Activated CD8-positive, alpha-beta memory T cell treated with anti-CD3 and anti-CD28 coated beads, Interleukin-2, amount 10 ng/mL, durations not matched to agents 7 days and 5 days (primary cell): ENCODE measurements at regions of chr2 and their contacts with region 1.

Region 1: DNA sequence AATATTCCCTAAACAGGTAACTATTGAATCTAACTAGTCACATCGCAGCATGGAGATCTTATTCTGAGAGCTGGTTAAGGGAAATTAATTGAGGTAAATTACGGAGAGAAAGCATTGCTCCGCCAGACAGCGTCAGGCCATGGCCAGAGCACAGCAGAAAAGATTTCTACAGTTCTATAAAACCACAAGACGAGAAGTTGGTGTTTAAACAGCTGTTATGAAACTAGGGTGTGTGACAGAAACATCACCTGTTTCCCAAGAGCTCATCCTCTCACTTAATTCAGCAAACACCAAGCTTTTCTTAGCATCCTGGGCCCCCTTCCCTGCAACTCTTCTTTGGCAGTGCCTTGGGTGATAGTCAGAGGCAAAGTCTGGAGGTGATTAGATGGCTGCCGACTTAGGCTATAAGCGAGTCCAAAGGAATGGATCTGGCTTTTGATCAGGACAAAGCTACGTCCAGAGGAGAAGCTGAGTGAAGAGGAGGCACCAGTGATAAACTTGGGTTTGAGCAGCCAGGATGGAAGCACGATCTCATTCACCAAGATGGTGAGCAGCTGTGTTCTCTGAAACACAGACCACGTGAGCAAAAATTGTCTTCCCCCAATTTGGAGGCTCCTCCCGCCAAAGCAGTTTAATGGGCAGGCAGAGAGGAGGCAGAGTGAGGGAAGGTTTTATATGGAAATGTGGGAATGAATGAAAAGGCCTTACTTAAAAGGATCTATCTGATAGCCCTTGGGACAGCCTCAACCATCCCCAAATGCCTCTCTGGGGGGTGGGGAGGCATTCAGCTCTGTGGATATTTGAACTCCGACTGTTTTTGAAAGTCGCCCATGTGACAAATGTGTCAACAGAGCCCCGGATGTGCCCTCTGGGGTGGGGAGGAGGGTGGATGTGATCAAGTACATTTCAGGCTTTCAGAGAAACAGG is 57.8 kb downstream of the PKDCC start:
- DNase-seq: peak; percentile 94
- ATAC-seq: peak; percentile 69
- H3K4me3 Mint-ChIP-seq: no peak overlapping the region
- H3K27ac Mint-ChIP-seq: no peak overlapping the region
- H3K4me1 Mint-ChIP-seq: peaks cover 32% of the 10 kb centered on the region
- H3K27me3 Mint-ChIP-seq: no peaks in the 10 kb centered on the region

Region 2: DNA sequence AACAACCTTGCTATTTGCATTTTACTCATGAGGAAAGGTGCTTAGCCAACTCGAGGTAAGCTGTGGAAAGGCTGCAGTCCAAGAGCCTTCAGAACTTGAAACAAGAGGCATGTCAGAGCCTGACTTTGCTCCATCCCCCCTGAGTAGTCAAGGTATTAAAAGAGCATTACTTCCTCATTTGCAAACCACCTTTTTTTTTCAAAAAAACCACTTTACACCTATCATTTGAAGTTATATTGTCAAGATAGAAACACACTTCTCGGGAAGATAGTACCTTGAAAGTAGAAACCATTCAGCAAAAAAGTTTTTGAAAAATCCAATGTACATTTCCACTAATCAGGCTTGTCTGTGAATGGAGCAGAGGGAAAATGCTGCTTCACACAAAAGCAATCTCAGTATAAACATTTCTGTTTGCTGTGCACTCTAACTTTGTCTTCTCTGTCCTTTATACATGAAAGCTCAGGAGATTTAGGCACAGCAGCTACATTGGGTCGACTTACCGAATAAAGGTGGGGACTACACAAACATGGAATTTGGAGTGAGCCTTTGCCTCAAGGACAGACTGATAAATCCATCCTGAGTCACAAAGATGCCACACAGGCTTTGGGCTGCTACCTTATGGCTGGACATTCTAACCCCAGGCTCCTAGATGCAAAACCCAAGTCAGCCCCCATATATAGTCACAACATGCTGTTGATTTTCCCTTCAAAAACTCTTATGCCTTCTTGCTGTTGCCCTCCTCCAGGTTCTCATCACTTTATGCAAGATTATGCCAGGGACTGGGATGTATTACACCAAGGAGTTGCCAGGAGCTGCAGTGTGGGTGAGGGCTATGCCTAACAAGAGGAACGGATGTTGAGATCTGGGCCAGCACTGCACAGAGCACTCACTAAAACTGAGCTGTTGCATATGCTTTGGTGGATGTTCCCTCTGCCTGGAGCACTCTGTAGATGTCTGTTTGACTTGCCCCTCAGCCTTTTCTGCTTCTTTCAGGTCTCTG is 22.1 kb after region 1 on chr2:
- CTCF ChIA-PET with region 1: interaction called, 24 read pairs
- DNase-seq: no peak
- ATAC-seq: peak; percentile 18
- H3K4me3 Mint-ChIP-seq: peak overlapping the region; percentile 53
- H3K27ac Mint-ChIP-seq: peak overlapping the region; percentile 90
- H3K4me1 Mint-ChIP-seq: peaks cover 87% of the 10 kb centered on the region
- H3K27me3 Mint-ChIP-seq: no peaks in the 10 kb centered on the region

Region 3: DNA sequence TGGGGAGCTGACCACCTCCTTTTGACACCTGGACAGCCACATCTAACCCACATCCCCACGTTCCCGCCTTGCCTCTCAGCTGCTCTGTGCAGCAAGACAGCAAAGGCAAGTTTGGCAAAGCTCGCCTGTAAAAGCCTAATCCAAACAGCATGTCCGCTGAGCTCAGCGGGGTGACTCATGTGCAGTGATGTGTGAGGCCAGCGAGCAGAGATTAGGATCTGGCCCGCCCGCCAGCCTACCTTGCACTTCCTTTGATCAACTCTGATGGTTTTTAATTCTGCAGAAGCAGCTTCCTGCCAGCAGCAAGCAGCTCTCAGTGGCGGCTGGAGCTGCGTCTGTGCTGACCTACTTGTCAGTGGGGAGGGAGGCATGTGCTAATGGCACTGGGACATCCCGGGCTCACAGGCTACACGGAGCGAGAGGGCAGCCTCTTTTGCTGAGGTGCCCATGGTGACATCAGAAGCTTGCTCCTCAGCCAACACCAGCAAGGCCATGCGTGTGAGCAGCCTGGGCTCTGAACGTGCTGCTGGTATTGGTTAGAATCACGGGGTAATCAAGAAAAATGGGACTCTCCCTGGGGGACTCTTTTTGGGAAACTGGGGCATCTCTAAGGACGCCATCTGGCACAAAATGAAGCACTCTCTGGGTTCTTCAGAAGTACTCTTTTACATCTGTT is 27.5 kb after region 1 on chr2:
- CTCF ChIA-PET with region 1: interaction called, 24 read pairs
- DNase-seq: peak; percentile 98
- ATAC-seq: peak; percentile 95
- H3K4me3 Mint-ChIP-seq: peak overlapping the region; percentile 61
- H3K27ac Mint-ChIP-seq: peak overlapping the region; percentile 98
- H3K4me1 Mint-ChIP-seq: peaks cover 80% of the 10 kb centered on the region
- H3K27me3 Mint-ChIP-seq: no peaks in the 10 kb centered on the region